Mammary epithelial cell (primary cell): ENCODE measurements at regions of chr1 and their contacts with region 1.

Region 1: DNA sequence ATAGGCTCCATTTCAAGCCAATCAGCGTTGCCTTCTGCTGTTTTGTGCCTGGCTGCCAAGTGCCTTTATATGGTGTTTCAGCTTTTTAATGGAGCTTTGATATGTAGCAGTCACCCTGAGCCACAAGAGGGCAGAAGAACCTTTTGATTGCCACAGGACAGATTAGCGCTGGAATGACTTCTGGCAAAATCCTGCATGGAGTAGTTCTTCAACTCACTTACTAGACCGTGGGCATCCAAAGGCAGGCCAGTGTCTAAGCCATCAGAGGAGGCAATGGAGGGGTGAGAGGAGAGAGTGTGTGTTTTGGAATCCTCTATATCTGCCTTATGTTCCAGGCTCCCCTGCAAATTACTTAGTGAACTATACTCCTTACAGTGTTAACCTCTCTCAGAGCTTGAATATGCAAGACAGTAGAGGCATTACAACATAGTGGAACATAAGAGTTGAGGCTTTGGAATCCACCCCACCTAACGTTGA is 56.2 kb downstream of the ST3GAL3 start:
- DNase-seq: peak; percentile 84
- H3K4me3 ChIP-seq: no peak overlapping the region
- H3K27ac ChIP-seq: peak overlapping the region; percentile 46
- H3K4me1 ChIP-seq: peaks cover 48% of the 10 kb centered on the region
- H3K27me3 ChIP-seq: no peaks in the 10 kb centered on the region
- CTCF ChIP-seq: peak; percentile 87 to 93

Region 2: DNA sequence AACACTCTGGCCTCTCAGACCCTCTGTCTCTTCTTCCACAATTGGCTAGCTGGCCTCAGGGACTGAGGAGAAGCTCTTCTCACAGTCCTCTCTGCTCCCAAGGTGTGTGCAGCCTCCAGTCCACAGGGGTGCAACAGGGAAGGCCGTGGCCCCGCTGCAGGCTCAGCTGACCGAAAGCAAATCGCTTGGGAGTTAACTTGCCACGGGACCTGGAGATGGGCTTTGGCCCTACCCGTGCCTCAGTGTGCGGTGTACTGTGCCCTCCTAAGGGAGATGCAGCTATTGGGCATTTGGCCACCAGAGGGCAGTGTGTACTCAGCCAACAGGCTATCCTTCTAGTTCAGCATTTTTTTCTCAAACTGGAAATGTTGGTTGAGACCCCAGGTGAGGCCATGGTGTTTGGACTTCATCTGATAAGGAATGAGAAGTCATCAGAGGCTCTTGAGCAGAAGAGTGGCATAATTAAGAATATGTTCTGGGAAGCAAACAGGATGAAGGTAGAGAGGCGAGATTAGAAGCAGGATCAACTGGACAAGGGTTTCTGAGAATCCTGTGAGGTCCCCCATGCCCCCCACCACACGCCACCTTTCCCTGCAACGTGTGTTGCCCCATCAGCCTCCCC is 536.3 kb before region 1 on chr1:
- CTCF ChIA-PET with region 1: no interaction called
- dilution Hi-C with region 1: no loop called
- in situ Hi-C with region 1: no loop called
- intact Hi-C with region 1: loop called (anchors 5 kb)
- DNase-seq: peak; percentile 37
- H3K4me3 ChIP-seq: no peak overlapping the region
- H3K27ac ChIP-seq: no peak overlapping the region
- H3K4me1 ChIP-seq: no peaks in the 10 kb centered on the region
- H3K27me3 ChIP-seq: no peaks in the 10 kb centered on the region
- CTCF ChIP-seq: peak; percentile 93 to 96

Region 3: DNA sequence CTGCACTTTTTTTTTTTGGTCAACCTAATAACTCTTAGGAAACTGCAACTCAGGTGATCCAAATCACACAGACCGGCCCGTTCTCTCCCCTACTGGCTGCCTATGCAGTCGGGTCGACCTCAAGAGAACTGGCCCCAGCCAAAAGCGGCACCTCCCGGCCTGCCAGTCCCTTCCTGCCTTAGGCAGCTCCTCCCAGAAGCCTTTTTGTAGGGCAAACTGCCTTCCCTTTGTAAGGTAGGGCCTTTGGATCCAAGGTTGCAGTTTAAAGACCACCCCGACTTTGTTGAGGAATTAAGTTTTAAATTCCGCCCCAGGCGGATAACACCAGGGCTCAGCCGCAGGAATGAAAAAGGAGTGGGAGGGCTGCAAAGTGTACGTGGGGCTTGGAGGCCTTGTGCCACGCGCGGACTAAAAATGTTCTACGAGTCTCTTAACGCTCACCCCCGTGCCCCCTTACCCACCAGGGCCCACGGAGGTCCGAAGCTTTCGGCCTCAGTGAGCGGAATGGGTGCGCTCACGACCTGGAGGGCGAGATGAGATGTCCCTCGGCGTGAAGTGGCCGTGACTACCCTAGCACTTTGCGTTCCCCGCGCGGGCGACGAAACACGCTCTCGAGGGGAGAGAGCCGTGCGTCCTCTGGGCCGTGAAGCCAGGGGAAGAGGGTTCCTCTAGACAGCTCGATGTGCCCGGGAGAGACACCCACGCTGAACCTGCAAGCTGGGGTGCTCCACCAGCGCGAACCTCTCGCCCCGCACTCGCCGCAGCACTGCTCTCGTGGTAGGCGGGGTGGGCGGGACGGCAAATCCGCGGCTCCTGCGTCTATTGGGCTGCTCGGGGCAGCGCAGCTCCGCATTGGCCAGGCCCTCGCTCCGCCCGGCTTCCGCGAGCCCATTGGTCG is 56.7 kb before region 1 on chr1:
- CTCF ChIA-PET with region 1: no interaction called
- dilution Hi-C with region 1: loop called (anchors 5 kb)
- in situ Hi-C with region 1: no loop called
- intact Hi-C with region 1: no loop called
- DNase-seq: peak; percentile 89
- H3K4me3 ChIP-seq: peak overlapping the region; percentile 65 to 89 (median 67)
- H3K27ac ChIP-seq: peak overlapping the region; percentile 8
- H3K4me1 ChIP-seq: peaks cover 33% of the 10 kb centered on the region
- H3K27me3 ChIP-seq: no peaks in the 10 kb centered on the region
- CTCF ChIP-seq: no peak

Region 4: GRCh38 chr1:43729816-43730463 is 33.6 kb before region 1 on chr1:
- CTCF ChIA-PET with region 1: no interaction called
- dilution Hi-C with region 1: no loop called
- in situ Hi-C with region 1: no loop called
- intact Hi-C with region 1: no loop called
- DNase-seq: no peak
- H3K4me3 ChIP-seq: no peak overlapping the region
- H3K27ac ChIP-seq: no peak overlapping the region
- H3K4me1 ChIP-seq: no peaks in the 10 kb centered on the region
- H3K27me3 ChIP-seq: no peaks in the 10 kb centered on the region
- CTCF ChIP-seq: no peak

Region 5: DNA sequence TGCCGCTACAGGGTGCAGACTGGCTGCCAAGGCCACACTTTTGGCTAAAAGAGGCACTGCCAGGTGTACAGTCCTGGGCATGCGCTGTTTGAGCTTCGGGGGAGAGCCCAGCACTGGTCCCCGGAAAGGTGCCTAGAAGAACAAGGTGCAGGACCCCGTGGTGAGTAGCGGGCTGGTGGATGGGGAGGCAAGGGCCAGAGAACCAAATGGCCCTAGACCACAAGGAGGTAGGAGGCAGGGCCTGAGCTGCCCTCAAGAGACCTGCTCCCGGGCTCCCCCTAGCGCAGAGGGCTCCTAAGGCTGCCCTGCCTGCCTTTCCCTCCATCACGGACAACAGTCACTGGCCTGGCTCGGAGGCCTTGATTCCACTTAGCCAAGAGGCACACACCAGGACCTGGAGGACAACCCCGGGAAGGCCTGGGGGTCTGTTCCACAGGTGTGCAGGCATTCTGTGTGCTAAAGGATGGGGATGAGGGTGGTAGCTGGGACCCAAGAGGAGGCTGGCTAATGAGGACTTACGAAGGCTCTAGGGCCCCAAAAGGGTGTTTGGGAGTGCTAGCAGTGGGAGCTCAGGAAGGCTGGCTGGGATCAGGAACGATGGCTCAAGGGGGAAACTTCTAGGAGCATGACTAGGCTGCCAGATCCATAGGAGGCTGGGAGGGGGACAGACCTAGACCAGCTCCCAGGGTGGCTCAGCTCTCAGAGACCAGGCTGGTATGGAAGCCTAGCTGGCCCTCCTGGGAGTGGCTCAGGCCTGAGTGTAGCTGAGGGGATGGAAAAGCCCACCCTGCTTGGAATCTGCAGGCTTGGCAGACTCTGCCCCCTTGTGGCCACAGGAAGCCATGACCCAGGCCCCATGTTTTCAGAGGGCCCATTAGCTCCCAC is 170.8 kb after region 1 on chr1:
- CTCF ChIA-PET with region 1: interaction called, 67 read pairs
- dilution Hi-C with region 1: loop called (anchors 5 kb)
- in situ Hi-C with region 1: no loop called
- intact Hi-C with region 1: loop called (anchors 1 kb)
- DNase-seq: peak; percentile 71
- H3K4me3 ChIP-seq: peak overlapping the region; percentile 69 to 74 (median 70)
- H3K27ac ChIP-seq: peak overlapping the region; percentile 81
- H3K4me1 ChIP-seq: peaks cover 73% of the 10 kb centered on the region
- H3K27me3 ChIP-seq: no peaks in the 10 kb centered on the region
- CTCF ChIP-seq: peak; percentile 89 to 95

Region 6: GRCh38 chr1:43991476-43992231 is 228.1 kb after region 1 on chr1 and contains the start of gene CCDC24:
- CTCF ChIA-PET with region 1: no interaction called
- dilution Hi-C with region 1: no loop called
- in situ Hi-C with region 1: no loop called
- intact Hi-C with region 1: loop called (anchors 2 kb)
- DNase-seq: peak; percentile 83
- H3K4me3 ChIP-seq: peak within 1 kb of the TSS; percentile 40 to 81 (median 55)
- H3K27ac ChIP-seq: peak within 1 kb of the TSS; percentile 77
- H3K4me1 ChIP-seq: peaks cover 14% of the 10 kb centered on the region
- H3K27me3 ChIP-seq: no peaks in the 10 kb centered on the region
- CTCF ChIP-seq: no peak
- total RNA-seq, gene CCDC24: 5.8 to 10.5 TPM

Region 7: GRCh38 chr1:44049839-44050238 is 286.3 kb after region 1 on chr1:
- CTCF ChIA-PET with region 1: interaction called, 15 read pairs
- dilution Hi-C with region 1: no loop called
- in situ Hi-C with region 1: no loop called
- intact Hi-C with region 1: loop called (anchors 1 kb)
- DNase-seq: peak; percentile 90
- H3K4me3 ChIP-seq: no peak overlapping the region
- H3K27ac ChIP-seq: peak overlapping the region; percentile 18
- H3K4me1 ChIP-seq: peaks cover 36% of the 10 kb centered on the region
- H3K27me3 ChIP-seq: no peaks in the 10 kb centered on the region
- CTCF ChIP-seq: no peak